ENCODE measurements at regions of chr14 and their contacts with region 1.

Region 1: DNA sequence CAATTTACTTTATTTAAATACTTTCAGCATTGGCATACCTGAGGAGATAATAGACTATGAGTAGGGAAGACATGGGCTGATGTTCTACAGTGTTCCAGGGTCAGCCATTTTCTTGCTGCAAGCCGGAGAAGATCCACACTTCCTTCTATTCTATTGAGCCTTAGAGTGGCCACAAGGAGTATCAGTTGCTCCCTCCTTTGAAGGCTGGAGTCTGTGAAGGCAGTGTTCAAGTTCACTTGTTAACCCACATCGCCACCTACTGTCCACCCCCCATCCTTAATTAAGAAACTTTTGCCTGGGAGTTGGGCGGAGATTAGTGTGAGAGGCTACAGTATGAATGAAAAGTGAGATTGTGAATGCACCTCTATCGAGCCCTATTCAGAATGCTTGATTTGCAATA is 666.6 kb downstream of the NRXN3 start:
- DNase-seq: peak; percentile 76
- H3K4me3 Mint-ChIP-seq: no peak overlapping the region
- H3K27ac Mint-ChIP-seq: no peak overlapping the region
- H3K4me1 Mint-ChIP-seq: no peaks in the 10 kb centered on the region
- H3K27me3 Mint-ChIP-seq: peaks cover 76% of the 10 kb centered on the region
- CTCF ChIP-seq: peak; percentile 66

Region 2: GRCh38 chr14:77862154-77862786 is 974.5 kb before region 1 on chr14:
- CTCF ChIA-PET with region 1: interaction called, 6 read pairs
- POLR2A ChIA-PET with region 1: no interaction called
- intact Hi-C with region 1: loop called (anchors 1 kb)
- DNase-seq: peak; percentile 58
- H3K4me3 Mint-ChIP-seq: no peak overlapping the region
- H3K27ac Mint-ChIP-seq: no peak overlapping the region
- H3K4me1 Mint-ChIP-seq: peaks cover 7% of the 10 kb centered on the region
- H3K27me3 Mint-ChIP-seq: no peaks in the 10 kb centered on the region
- CTCF ChIP-seq: peak; percentile 94

Region 3: DNA sequence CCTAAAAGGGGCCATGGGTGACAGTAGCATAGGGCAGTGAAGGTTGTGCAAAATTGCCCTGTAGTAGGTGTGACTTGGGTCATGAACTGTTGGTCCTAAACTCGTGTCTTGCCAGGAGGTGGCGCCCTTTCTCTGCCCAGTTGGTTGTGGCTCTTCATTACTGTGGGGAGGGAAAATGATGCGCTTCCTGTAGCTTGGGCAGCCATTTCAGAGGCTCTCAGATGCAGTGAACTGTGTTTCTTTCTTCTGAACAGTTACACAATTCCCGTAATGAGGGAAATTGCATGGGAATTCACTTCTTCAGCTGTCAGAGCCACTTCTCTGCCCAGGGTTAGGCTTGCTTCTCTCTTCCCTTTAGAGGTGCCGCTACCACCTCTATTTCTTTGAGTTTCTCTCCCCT is 814.7 kb before region 1 on chr14:
- CTCF ChIA-PET with region 1: no interaction called
- POLR2A ChIA-PET with region 1: no interaction called
- intact Hi-C with region 1: loop called (anchors 10 kb)
- DNase-seq: peak; percentile 80
- H3K4me3 Mint-ChIP-seq: no peak overlapping the region
- H3K27ac Mint-ChIP-seq: no peak overlapping the region
- H3K4me1 Mint-ChIP-seq: no peaks in the 10 kb centered on the region
- H3K27me3 Mint-ChIP-seq: peaks cover 9% of the 10 kb centered on the region
- CTCF ChIP-seq: peak; percentile 73

Region 4: DNA sequence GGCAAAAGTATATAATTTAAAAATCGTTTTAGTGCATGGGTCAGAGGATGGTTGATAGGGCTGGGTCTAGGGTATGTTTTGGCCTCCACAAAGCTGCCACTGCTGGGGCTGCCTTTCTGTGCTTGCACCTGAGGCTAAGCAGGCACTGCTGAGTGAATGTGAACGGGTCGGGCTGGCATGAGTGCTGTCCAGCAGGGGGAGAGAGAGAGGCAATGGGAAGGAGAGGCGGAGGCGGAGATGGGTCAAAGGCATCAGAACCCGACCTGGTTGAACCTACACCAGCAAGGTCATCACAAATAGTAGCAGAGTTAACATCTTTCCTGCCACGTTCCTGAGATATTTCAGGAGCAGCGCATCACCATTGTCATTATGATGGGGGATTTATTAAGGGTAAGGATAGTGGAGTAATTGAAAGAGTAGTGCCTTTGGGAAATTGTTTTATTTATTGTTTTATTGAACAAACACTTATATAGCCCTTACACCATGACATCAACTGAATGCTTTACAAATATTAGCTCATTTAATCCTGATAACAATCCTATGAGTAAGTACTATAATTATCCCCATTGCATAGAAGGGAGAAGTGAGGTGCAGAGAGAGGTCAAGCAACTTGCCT is 672.4 kb before region 1 on chr14:
- CTCF ChIA-PET with region 1: no interaction called
- POLR2A ChIA-PET with region 1: no interaction called
- intact Hi-C with region 1: loop called (anchors 5 kb)
- DNase-seq: peak; percentile 49
- H3K4me3 Mint-ChIP-seq: no peak overlapping the region
- H3K27ac Mint-ChIP-seq: no peak overlapping the region
- H3K4me1 Mint-ChIP-seq: no peaks in the 10 kb centered on the region
- H3K27me3 Mint-ChIP-seq: peaks cover 58% of the 10 kb centered on the region
- CTCF ChIP-seq: peak; percentile 57

Region 5: GRCh38 chr14:78697341-78697740 is 139.4 kb before region 1 on chr14:
- CTCF ChIA-PET with region 1: interaction called, 8 read pairs
- POLR2A ChIA-PET with region 1: interaction called, 3 read pairs
- intact Hi-C with region 1: loop called (anchors 1 kb)
- DNase-seq: peak; percentile 33
- H3K4me3 Mint-ChIP-seq: no peak overlapping the region
- H3K27ac Mint-ChIP-seq: no peak overlapping the region
- H3K4me1 Mint-ChIP-seq: no peaks in the 10 kb centered on the region
- H3K27me3 Mint-ChIP-seq: peaks cover 69% of the 10 kb centered on the region
- CTCF ChIP-seq: peak; percentile 69

Region 6: DNA sequence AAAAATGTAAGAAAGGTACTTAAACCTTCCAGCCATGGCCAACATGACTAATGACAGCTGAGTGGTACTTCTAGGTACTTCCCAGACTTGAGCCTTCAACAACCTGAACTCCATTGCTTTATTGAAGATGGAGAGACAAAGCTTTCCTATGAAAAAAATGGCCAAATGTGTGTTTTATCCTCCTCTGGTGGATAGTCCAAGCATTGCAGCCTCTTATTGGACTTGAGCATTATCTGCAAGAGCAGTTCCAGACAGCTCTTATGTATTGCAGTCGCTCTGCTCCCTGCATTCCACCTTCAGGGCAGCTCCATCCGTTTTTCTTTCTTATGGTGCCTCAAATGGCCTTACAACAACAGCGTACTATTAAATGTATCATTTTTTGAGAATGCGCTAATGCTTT is 78.4 kb before region 1 on chr14:
- CTCF ChIA-PET with region 1: interaction called, 4 read pairs
- POLR2A ChIA-PET with region 1: no interaction called
- intact Hi-C with region 1: loop called (anchors 2 kb)
- DNase-seq: peak; percentile 50
- H3K4me3 Mint-ChIP-seq: no peak overlapping the region
- H3K27ac Mint-ChIP-seq: no peak overlapping the region
- H3K4me1 Mint-ChIP-seq: peaks cover 6% of the 10 kb centered on the region
- H3K27me3 Mint-ChIP-seq: no peaks in the 10 kb centered on the region
- CTCF ChIP-seq: peak; percentile 78

Region 7: DNA sequence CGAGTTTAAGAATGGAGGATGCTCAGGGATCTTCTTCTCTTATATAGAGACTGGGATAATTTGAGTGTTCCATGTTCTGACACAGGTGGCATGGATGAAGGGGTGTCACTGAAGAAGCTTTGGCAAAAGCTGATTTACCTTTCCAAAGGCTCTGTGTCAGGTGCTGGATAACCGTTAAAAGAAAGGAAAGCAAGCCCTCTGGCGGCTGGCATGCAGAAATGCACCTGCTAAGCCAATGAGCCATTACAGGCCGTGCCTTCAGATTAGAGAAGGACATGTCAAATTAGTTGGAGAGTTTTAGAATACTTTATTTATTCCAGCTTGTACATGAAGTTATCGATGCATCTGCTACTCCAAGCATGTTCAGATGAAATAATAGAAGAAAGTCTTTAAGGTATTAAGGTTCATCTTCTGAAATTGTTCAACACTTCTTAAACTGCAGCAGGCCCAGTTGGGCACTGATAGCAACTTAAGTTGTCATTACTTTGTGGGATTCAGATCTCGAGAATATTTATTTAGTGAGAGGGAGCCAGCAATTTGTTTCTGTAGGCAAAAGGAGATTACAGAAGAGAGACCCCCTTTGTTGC is 11.6 kb after region 1 on chr14:
- CTCF ChIA-PET with region 1: interaction called, 21 read pairs
- POLR2A ChIA-PET with region 1: no interaction called
- intact Hi-C with region 1: no loop called
- DNase-seq: peak; percentile 71
- H3K4me3 Mint-ChIP-seq: no peak overlapping the region
- H3K27ac Mint-ChIP-seq: no peak overlapping the region
- H3K4me1 Mint-ChIP-seq: no peaks in the 10 kb centered on the region
- H3K27me3 Mint-ChIP-seq: peaks cover 49% of the 10 kb centered on the region
- CTCF ChIP-seq: peak; percentile 98

Measured in MCF 10A (cell line).